Activated CD4-positive, alpha-beta memory T cell treated with anti-CD3 and anti-CD28 coated beads for 36 hours (primary cell): ENCODE measurements at regions of chr20 and their contacts with region 1.

Region 1: DNA sequence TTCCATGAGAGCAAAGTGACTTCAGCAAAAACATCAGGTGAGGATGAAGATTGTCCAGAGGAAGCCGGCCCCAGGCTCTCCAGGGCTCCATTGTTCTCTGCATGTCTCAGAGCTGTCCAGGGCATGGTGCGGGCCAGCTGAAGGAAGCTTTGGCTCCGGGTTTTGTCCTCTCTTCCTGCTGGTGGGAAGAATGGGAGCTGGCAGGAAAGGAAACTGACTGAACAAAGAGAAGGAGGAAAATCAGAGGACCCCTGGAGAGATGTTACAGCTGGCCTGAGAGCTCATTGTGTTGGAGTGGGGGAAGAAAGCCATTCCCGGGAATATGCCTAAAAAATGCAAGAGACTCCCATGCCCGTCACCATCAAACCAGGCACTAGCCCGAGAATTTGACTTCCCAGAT is 27.1 kb downstream of the PRND start:
- DNase-seq: no peak
- H3K4me3 Mint-ChIP-seq: no peak overlapping the region
- H3K27ac Mint-ChIP-seq: no peak overlapping the region
- H3K4me1 Mint-ChIP-seq: no peaks in the 10 kb centered on the region
- H3K27me3 Mint-ChIP-seq: no peaks in the 10 kb centered on the region

Region 2: DNA sequence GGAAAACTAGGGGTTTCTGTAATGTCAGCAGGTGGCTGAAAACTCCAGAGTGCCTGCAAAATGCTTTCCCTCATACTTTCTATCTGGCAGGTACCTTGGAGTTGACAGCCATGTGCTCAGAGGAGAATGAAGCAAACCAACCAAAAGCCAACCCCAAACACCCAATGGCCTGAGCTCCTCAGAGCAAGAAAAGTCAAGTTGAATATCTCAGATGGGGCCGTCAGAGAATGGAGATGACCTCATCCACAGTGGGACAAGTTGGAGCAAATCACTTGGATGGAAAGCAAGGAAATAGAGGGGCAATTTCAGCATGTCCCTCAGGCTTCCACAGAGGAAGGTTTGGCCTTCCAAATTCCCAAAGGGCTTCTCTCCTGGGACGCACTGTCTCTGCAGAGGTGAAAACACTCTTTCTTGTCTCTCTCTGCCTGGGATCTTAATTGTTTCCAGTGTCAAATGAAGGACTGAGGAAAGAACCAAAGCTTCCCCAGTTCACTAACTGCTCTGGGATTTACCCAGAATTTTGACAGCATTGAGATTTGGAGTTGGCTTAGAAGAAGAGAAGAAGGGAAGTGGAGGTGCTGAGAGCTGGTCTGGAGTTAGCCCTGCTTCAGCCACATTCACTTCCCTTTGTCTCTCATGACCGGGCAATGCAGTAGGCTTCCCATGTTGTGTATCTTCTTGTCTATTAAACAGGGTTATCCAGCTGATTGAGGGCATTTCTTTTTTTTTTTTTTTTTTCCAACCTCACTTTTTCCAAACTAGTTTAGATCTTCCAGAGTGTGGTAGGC is 15.1 kb after region 1 on chr20:
- CTCF ChIA-PET with region 1: interaction called, 16 read pairs
- POLR2A ChIA-PET with region 1: no interaction called
- intact Hi-C with region 1: no loop called
- DNase-seq: no peak
- H3K4me3 Mint-ChIP-seq: no peak overlapping the region
- H3K27ac Mint-ChIP-seq: no peak overlapping the region
- H3K4me1 Mint-ChIP-seq: peaks cover 7% of the 10 kb centered on the region
- H3K27me3 Mint-ChIP-seq: peaks cover 1% of the 10 kb centered on the region